ENCODE measurements at regions of chr1 and their contacts with region 1.

Region 1: GRCh38 chr1:240189386-240189989 is 97.8 kb downstream of the FMN2 start:
- DNase-seq: peak; percentile 62
- H3K4me3 ChIP-seq: no peak overlapping the region
- H3K27ac ChIP-seq: no peak overlapping the region
- H3K4me1 ChIP-seq: peaks cover 42% of the 10 kb centered on the region
- H3K27me3 ChIP-seq: no peaks in the 10 kb centered on the region

Region 2: DNA sequence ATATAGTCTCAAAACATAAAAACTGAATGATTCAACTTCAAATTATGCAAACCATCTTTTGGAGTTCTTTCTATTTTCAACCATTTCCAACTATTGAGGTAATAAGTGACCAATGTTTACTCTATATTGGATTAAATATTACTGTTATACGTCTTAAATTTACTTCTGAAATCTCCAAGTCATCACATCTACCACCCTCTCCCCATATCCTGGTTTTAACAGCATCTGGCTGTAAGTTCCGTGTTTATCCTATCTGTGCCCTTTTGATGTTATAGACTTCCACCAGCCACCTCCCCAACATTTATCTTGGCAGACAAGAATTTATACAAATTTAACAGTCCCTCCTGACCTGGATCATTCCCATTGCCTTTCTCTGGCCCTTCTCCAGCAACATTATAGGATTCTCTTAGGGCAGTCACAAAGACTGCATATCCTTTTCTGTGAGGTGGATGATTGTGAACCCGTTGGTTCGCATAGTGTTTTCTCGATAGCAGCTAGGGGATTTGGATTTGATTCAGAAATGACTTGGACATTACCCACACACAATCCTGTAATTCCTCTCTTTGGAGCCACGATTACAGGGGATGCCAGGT is 411.2 kb before region 1 on chr1:
- in situ Hi-C with region 1: no loop called
- DNase-seq: no peak
- H3K4me3 ChIP-seq: no peak overlapping the region
- H3K27ac ChIP-seq: no peak overlapping the region
- H3K4me1 ChIP-seq: no peaks in the 10 kb centered on the region
- H3K27me3 ChIP-seq: no peaks in the 10 kb centered on the region

Region 3: DNA sequence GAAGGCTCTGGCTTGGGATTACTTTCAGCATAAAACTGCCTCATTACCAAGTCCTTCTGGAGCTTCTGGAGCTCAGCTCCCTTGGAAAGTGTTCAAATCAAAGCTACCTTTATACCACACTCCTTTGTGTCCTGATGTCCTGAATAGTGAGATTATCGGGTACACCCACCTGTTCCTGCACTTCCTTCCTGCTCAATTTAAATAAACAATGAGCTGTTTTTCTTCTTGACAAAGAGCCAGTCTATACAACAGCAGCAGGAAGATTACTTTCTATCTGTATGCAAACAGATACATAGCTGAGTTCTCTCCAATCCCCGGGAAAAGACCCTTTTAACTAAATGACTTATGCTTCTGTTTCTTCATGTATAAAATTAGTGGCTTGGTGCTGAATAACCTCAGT is 355.8 kb before region 1 on chr1:
- in situ Hi-C with region 1: no loop called
- DNase-seq: no peak
- H3K4me3 ChIP-seq: no peak overlapping the region
- H3K27ac ChIP-seq: no peak overlapping the region
- H3K4me1 ChIP-seq: no peaks in the 10 kb centered on the region
- H3K27me3 ChIP-seq: no peaks in the 10 kb centered on the region

Region 4: GRCh38 chr1:240691521-240692338 is 502.2 kb after region 1 on chr1:
- in situ Hi-C with region 1: loop called (anchors 10 kb)
- DNase-seq: peak; percentile 85
- H3K4me3 ChIP-seq: no peak overlapping the region
- H3K27ac ChIP-seq: no peak overlapping the region
- H3K4me1 ChIP-seq: peaks cover 8% of the 10 kb centered on the region
- H3K27me3 ChIP-seq: no peaks in the 10 kb centered on the region

Region 5: DNA sequence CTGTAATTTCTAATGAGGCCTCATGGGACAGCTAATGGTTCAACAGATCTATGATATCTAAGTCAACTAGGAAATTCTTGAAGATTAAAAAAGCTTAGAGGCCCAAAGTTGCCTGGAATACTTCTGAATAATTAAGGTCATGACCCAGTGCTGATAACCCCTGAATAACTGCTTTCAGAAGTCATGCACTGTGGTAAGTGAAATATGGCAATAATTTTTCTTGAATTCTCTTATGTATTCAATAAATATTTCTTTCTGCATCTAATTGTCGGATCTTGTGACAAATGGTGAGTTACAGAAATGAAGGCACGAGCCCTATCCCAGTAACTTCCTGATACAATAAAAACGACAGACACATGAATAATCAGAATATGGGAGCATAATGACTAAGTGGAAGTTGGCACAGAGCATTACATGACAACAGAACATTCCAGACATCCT is 641.7 kb after region 1 on chr1:
- in situ Hi-C with region 1: loop called (anchors 25 kb)
- DNase-seq: peak; percentile 94
- H3K4me3 ChIP-seq: no peak overlapping the region
- H3K27ac ChIP-seq: peak overlapping the region; percentile 61
- H3K4me1 ChIP-seq: peaks cover 16% of the 10 kb centered on the region
- H3K27me3 ChIP-seq: no peaks in the 10 kb centered on the region